ENCODE measurements at regions of chr20 and their contacts with region 1.

Region 1: DNA sequence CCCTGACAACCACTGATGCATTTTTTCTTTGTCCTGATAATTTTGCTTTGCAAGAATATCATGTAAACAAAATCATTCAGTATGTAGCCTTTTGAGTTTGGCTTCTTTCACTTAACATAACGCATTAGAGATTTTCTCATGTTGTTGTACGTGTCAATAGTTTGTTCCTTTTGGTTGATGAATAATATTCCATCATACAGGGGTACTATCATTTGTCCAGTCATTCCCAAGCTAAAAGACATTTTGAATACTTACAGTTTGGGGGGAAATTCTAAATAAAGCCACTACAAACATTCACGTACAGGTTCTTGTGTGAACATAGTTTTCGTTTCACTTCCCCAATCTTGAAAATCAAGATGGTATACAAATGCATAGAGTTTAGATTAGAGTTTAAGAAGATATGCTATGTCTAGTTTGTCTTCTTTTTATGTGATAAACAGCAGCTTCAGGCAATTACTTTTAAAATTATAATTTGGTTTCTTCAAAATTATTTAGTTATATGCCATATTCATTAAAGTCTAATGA is 5.2 kb downstream of the HAO1 start:
- H3K4me3 Mint-ChIP-seq: no peak overlapping the region
- H3K27ac Mint-ChIP-seq: no peak overlapping the region
- H3K4me1 Mint-ChIP-seq: peaks cover 18% of the 10 kb centered on the region
- H3K27me3 Mint-ChIP-seq: peaks cover 2% of the 10 kb centered on the region

Region 2: GRCh38 chr20:7806831-7807230 is 128.3 kb before region 1 on chr20:
- intact Hi-C with region 1: no loop called
- H3K4me3 Mint-ChIP-seq: no peak overlapping the region
- H3K27ac Mint-ChIP-seq: no peak overlapping the region
- H3K4me1 Mint-ChIP-seq: no peaks in the 10 kb centered on the region
- H3K27me3 Mint-ChIP-seq: no peaks in the 10 kb centered on the region

Region 3: GRCh38 chr20:7897781-7898364 is 37.2 kb before region 1 on chr20:
- intact Hi-C with region 1: loop called (anchors 5 kb)
- H3K4me3 Mint-ChIP-seq: no peak overlapping the region
- H3K27ac Mint-ChIP-seq: peak overlapping the region; percentile 75
- H3K4me1 Mint-ChIP-seq: peaks cover 15% of the 10 kb centered on the region
- H3K27me3 Mint-ChIP-seq: no peaks in the 10 kb centered on the region

Region 4: DNA sequence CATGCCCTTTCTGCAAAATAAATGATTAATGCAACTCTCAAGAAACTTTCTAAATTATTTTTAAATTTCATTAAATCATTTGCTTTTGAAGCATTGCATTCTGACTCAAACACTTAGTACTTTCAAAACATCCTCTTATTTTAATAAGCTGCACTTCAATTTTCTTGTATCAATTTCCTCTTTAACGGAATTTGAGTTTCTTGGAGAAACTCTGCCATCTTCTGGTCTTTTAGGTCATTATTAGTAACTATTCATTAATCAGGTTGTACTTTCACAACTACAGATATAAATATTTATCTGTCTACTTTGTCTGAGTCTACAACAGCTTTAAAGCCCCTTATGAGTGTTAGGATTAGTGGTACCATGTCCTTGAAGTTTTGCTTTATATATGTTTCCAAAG is 54.3 kb after region 1 on chr20:
- intact Hi-C with region 1: loop called (anchors 2 kb)
- H3K4me3 Mint-ChIP-seq: no peak overlapping the region
- H3K27ac Mint-ChIP-seq: no peak overlapping the region
- H3K4me1 Mint-ChIP-seq: peaks cover 4% of the 10 kb centered on the region
- H3K27me3 Mint-ChIP-seq: no peaks in the 10 kb centered on the region

Measured in dendritic cell treated with granulocyte-macrophage colony-stimulating factor and Interleukin-4, amounts not matched to agents 40 ng/mL and 50 ng/mL, for 4 days (primary cell).